ENCODE measurements at regions of chr4 and their contacts with region 1.

Region 1: DNA sequence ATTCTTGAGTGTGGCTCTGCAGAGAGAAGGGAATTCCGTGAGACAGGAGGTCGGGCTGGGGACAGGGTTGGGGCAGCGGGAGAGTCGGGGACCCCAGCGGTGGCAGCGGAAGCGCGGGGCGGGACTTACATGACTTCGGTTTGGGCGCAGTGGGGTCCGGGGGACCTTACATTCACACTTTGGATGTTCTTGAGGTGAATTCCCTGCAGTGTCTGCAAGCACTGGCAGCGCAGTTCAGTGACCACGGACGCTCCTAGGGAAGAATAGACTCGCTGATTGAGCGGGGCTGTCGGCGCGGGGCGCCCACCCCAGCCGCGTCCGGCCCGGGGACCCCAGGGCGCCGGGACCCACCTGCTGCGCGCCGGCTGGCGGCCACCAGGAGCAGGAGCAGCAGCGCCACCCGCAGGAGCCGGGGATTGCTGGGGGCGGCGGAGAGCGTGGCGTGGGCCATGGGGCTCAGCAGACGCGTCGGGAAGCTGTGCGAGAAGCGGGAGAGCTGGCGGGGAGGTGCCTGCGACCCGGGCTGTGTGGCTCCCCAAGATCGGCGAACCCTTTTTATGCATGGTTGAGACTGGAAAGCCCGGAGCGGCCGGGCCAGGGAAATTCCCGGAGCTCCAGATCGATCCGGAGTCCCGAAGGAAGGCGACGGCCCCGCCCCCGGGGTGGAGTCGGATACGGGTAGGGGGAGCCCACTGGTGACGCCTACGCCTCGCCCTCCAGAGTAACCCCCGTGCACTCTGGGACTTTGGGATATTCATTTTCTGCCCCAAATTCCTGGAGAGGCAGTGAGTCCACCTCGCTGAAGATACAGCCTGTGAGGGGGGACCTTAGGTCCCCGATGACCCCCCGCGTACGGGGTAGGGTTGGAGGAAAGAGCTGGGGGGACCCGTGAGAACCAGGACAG is at the start of gene CXCL3:
- DNase-seq: peak; percentile 79
- H3K4me3 ChIP-seq: peak within 1 kb of the TSS; percentile 59 to 73 (median 64)
- H3K27ac ChIP-seq: peak within 1 kb of the TSS; percentile 42 to 71 (median 66)
- H3K4me1 ChIP-seq: peaks cover 0 to 14% (median 7%) of the 10 kb centered on the region in 4 donors
- H3K27me3 ChIP-seq: no peaks in the 10 kb centered on the region
- CTCF ChIP-seq: peak in 2 of 4 experiments; percentile 18 to 61
- EP300 ChIP-seq: no peak
- POLR2A ChIP-seq: no peak
- total RNA-seq, gene CXCL3: 4.8 TPM in 1 of 4 donors, not detected in the others

Region 2: GRCh38 chr4:73869130-73870050 is 169.0 kb before region 1 on chr4 and contains the start of gene CXCL1:
- intact Hi-C with region 1: loop called (anchors 10 kb)
- DNase-seq: peak; percentile 71
- H3K4me3 ChIP-seq: peak within 1 kb of the TSS; percentile 58 to 74 (median 64)
- H3K27ac ChIP-seq: peak within 1 kb of the TSS; percentile 35 to 79 (median 48)
- H3K4me1 ChIP-seq: peaks cover 0 to 18% (median 9%) of the 10 kb centered on the region in 4 donors
- H3K27me3 ChIP-seq: peaks cover 0 to 17% (median 0%) of the 10 kb centered on the region in 3 donors
- CTCF ChIP-seq: no peak
- EP300 ChIP-seq: no peak
- POLR2A ChIP-seq: no peak
- total RNA-seq, gene CXCL1: 1.5 to 6.8 (median 4.0) TPM

Region 3: GRCh38 chr4:74127745-74128144 is 89.3 kb after region 1 on chr4:
- intact Hi-C with region 1: no loop called
- DNase-seq: no peak
- H3K4me3 ChIP-seq: no peak overlapping the region
- H3K27ac ChIP-seq: no peak overlapping the region
- H3K4me1 ChIP-seq: no peaks in the 10 kb centered on the region
- H3K27me3 ChIP-seq: no peaks in the 10 kb centered on the region
- CTCF ChIP-seq: no peak
- EP300 ChIP-seq: no peak
- POLR2A ChIP-seq: no peak

Measured in sigmoid colon (tissue), 7 donors.